GM10248 (cell line): ENCODE measurements at regions of chr4 and their contacts with region 1.

Region 1: DNA sequence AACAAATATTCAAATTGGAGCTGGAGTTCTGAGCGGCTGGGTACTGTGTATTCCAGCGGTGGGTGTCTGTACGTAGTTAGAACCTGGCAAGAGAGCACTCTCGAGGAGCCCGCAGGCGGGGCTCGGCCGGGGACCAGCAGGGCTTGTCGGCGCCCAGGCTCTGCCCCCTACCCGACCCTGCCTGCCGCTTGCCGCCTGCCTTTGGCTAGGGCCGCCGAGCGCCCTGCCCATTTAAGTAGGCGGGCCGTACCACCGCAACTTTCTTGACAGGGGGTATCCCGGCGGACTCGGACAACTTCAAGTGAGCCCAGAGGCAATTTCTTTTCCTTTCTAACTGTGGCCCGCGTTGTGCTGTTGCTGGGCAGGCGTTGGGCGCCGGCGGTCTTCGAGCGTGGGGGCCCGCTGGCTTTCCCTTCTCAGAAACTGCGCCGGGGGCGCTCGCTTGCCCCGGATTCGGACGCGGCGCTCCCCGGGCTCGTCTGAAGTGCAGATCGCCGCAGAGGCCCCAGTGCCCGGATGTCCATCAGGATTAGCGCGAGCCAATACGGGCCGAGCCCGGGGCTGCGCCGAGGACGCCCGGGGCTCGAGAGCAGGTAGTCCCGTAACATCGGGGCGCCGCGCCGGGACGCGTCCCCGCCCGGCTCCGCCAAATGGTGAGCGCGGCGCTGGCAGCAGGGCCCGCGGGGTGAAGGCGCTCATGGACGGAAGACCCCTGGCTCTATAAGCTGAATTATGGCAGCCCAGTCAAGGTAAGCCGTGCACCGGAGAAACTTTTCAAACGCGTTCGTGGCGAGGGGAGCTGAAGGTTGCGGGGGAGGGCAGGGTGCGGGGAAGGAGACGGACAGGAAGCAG is 72.1 kb downstream of the AFF1 start:
- DNase-seq: peak; percentile 82
- CTCF ChIP-seq: no peak

Region 2: DNA sequence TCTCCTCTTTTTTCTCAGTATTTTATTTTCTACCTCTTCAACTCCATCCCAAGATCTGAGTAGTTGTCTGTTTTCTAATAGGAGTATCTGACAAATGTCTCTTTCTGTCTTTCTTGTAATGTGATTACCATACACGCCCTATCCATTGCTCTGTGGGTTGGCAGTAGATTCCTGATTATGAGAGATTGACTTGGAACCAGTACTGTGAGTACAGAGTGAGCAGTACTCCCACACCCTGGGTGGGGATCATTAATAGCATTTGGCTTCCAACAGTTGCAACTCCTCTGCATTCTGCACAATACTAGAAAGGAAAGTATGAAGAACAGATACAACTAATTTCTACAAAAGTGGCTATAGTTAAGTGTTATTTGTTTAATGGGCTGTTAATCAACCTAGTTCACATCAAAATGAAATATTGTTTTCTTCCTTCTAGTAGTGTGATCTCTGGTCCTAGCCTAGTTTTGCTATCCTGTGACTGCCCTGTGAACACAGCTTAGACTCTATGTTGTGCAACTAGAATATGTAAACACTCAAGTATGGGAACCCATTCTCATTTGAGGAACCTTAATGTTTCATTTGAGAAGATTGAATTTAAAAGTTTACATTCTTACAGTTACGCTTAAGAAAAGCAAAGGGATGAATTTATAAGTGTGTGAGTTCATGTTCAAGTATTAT is 299.8 kb before region 1 on chr4:
- CTCF ChIA-PET with region 1: no interaction called
- POLR2A ChIA-PET with region 1: no interaction called
- DNase-seq: no peak
- CTCF ChIP-seq: no peak

Region 3: DNA sequence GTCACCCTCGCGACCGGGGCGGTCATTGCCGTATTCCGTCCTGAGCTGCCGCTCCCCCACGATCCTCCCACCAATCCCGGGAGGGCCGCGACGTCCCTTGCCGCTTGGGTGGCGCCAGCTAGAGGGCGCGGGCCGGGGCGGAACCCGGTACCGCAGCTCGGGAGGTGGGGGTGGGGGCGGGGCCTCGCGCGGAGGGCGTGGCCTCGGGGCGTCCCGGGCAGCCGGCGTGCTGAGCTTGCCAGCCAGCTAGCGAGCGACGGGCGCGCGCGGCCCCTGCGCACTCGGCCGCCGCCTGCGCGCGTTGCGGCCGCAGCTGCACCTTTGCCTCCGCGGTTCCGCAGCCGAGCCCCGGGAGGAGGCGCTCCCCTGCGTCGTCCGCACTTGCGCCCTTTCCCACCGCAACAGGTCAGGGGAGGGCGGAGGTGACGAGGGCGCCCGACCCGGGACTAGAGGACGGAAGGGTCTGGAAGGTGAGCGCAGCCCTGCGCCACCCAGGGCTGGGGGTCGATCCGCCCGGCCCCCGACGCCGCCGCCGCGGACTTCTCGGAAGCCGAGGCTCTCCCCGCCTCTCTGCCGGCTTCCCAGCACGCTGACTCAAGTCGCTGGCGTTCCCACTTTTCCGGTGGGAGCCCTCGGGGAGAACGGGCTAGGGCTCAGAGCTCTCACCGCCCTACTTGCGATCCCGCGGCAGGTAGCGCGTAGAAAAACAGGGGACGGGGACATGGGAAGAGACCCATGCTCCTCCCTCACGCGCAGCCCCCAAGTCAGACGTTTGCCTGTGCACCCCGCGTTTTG is 71.9 kb before region 1 on chr4 and contains the start of gene AFF1:
- CTCF ChIA-PET with region 1: interaction called, 9 read pairs
- POLR2A ChIA-PET with region 1: interaction called, 47 read pairs
- DNase-seq: peak; percentile 91
- CTCF ChIP-seq: peak; percentile 55

Region 4: GRCh38 chr4:86993909-86994681 is 12.8 kb before region 1 on chr4:
- CTCF ChIA-PET with region 1: interaction called, 12 read pairs
- POLR2A ChIA-PET with region 1: interaction called, 21 read pairs
- DNase-seq: no peak
- CTCF ChIP-seq: no peak

Region 5: DNA sequence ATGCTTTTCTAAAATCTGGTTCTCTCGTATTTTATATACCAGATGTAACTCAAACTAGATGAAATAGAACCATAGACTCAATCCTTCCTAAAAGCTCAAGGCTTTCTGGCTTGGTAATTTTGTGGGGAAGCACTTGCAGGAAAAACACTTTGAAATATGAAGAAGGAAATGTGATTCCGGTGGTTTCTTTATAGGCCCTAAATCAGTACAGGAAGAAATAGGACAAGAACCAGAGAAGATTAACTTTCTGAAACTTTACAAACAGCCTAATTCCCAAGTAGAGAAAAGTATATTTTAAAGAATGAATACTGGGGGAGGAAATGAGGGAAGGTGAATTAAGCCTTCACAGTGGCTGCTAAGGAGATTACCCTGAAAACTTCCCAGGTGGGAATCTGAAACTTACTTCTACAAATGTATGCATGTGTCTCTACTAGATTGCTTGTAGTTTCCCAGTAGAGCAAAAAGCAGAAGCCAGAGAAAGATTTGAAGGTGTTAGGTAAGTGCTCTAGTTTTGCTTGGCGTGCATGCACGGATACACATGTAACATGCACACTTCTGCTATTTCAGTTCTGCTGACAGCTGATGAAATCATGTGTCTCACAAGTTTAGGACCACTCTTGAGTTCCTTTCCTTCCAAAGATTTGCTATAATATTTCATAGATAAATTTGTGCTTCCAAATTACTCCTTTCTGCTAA is 20.0 kb after region 1 on chr4:
- CTCF ChIA-PET with region 1: interaction called, 14 read pairs
- POLR2A ChIA-PET with region 1: interaction called, 3 read pairs
- DNase-seq: peak; percentile 75
- CTCF ChIP-seq: no peak